ENCODE measurements at regions of chr19 and their contacts with region 1.

Region 1: GRCh38 chr19:49104229-49104864 is 9.8 kb upstream of the LIN7B start:
- DNase-seq: no peak
- H3K4me3 ChIP-seq: no peak overlapping the region
- H3K27ac ChIP-seq: no peak overlapping the region
- H3K4me1 ChIP-seq: peaks cover 0 to 7% (median 0%) of the 10 kb centered on the region in 3 donors
- H3K27me3 ChIP-seq: no peaks in the 10 kb centered on the region
- CTCF ChIP-seq: no peak
- POLR2A ChIP-seq: no peak

Region 2: GRCh38 chr19:49196527-49197240 is 92.3 kb after region 1 on chr19:
- intact Hi-C with region 1: loop called (anchors 5 kb)
- DNase-seq: no peak
- H3K4me3 ChIP-seq: no peak overlapping the region
- H3K27ac ChIP-seq: no peak overlapping the region
- H3K4me1 ChIP-seq: peaks cover 0 to 13% (median 0%) of the 10 kb centered on the region in 3 donors
- H3K27me3 ChIP-seq: no peaks in the 10 kb centered on the region
- CTCF ChIP-seq: no peak
- POLR2A ChIP-seq: no peak

Region 3: GRCh38 chr19:49421039-49421877 is 316.9 kb after region 1 on chr19:
- intact Hi-C with region 1: no loop called
- DNase-seq: no peak
- H3K4me3 ChIP-seq: peak overlapping the region in 3 of 4 donors; percentile 9 to 53 (median 20)
- H3K27ac ChIP-seq: no peak overlapping the region
- H3K4me1 ChIP-seq: peaks cover 17 to 36% (median 24%) of the 10 kb centered on the region in 3 donors
- H3K27me3 ChIP-seq: peaks cover 11 to 100% (median 43%) of the 10 kb centered on the region in 4 donors
- CTCF ChIP-seq: no peak
- POLR2A ChIP-seq: no peak